ENCODE measurements at regions of chr11 and their contacts with region 1.

Region 1: GRCh38 chr11:64489831-64490441 is 101.1 kb upstream of the SLC22A12 start:
- DNase-seq: peak; percentile 37 to 59
- ATAC-seq: peak; percentile 49 to 74 (median 68)
- H3K4me3 ChIP-seq: no peak overlapping the region
- H3K4me3 Mint-ChIP-seq: no peak overlapping the region
- H3K27ac ChIP-seq: no peak overlapping the region
- H3K27ac Mint-ChIP-seq: peak overlapping the region in 1 of 2 donors; percentile 54
- H3K4me1 ChIP-seq: peaks cover 4% of the 10 kb centered on the region
- H3K4me1 Mint-ChIP-seq: peaks cover 9 to 18% of the 10 kb centered on the region in 2 donors
- H3K27me3 ChIP-seq: no peaks in the 10 kb centered on the region
- H3K27me3 Mint-ChIP-seq: peaks cover 21 to 49% of the 10 kb centered on the region in 2 donors
- CTCF ChIP-seq: peak; percentile 50

Region 2: GRCh38 chr11:64448599-64449556 is 41.1 kb before region 1 on chr11:
- intact Hi-C with region 1: loop called (anchors 2 kb)
- DNase-seq: peak; percentile 72 to 80
- ATAC-seq: peak; percentile 80 to 85 (median 83)
- H3K4me3 ChIP-seq: peak overlapping the region; percentile 15
- H3K4me3 Mint-ChIP-seq: peak overlapping the region; percentile 79
- H3K27ac ChIP-seq: no peak overlapping the region
- H3K27ac Mint-ChIP-seq: peak overlapping the region in 1 of 2 donors; percentile 75
- H3K4me1 ChIP-seq: peaks cover 22% of the 10 kb centered on the region
- H3K4me1 Mint-ChIP-seq: peaks cover 14 to 19% of the 10 kb centered on the region in 2 donors
- H3K27me3 ChIP-seq: no peaks in the 10 kb centered on the region
- H3K27me3 Mint-ChIP-seq: peaks cover 5 to 17% of the 10 kb centered on the region in 2 donors
- CTCF ChIP-seq: peak; percentile 54